A549 (cell line): ENCODE measurements at regions of chr3 and their contacts with region 1.

Region 1: GRCh38 chr3:27659279-27660021 is 62.7 kb downstream of the EOMES start:
- DNase-seq: peak; percentile 77 to 83
- ATAC-seq: peak; percentile 86 to 95
- H3K4me3 ChIP-seq: no peak overlapping the region
- H3K27ac ChIP-seq: peak overlapping the region in 1 of 2 experiments; percentile 53; a peak in 3 of 6 replicates
- H3K4me1 ChIP-seq: peaks cover 17% of the 10 kb centered on the region; the same call in 2 of the 3 replicates
- CTCF ChIP-seq: peak; percentile 62
- EP300 ChIP-seq: no peak
- POLR2A ChIP-seq: no peak
- RAD21 ChIP-seq: peak; percentile 66 to 71

Region 2: GRCh38 chr3:27670619-27671018 is 11.2 kb after region 1 on chr3:
- CTCF ChIA-PET with region 1: interaction called, 15 read pairs
- POLR2A ChIA-PET with region 1: no interaction called
- DNase-seq: no peak
- ATAC-seq: 0 out of 6 replicates have a peak, but pooled peaks of 1 of the 2 experiments have one; percentile 19
- H3K4me3 ChIP-seq: no peak overlapping the region
- H3K27ac ChIP-seq: no peak overlapping the region
- H3K4me1 ChIP-seq: peaks cover 13% of the 10 kb centered on the region; the same call in 2 of the 3 replicates
- CTCF ChIP-seq: no peak
- EP300 ChIP-seq: no peak
- POLR2A ChIP-seq: no peak
- RAD21 ChIP-seq: no peak